ENCODE measurements at regions of chr4 and their contacts with region 1.

Region 1: DNA sequence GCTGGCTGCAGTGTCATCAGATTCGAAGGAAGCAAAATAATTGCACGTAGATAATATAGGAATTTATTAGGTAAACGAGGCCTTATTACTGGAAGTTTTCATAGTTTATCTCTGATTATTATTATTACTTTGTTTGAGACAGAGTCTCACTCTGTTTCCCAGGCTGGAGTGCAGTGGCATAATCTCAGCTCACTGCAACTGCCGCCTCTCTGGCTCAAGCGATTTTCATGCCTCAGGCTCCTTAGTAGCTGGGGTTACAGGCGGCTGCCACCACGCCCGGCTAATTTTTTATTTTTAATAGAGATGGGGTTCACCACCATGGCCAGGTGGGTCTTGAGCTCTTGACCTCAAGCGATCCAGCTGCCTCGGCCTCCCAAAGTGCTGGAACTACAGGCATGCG is 12.5 kb downstream of the CLCN3 start:
- DNase-seq: no peak
- ATAC-seq: no peak
- H3K4me3 ChIP-seq: no peak overlapping the region
- H3K27ac ChIP-seq: no peak overlapping the region
- H3K4me1 ChIP-seq: no peaks in the 10 kb centered on the region
- H3K27me3 ChIP-seq: no peaks in the 10 kb centered on the region
- CTCF ChIP-seq: no peak
- EP300 ChIP-seq: no peak
- POLR2A ChIP-seq: no peak
- RAD21 ChIP-seq: no peak

Region 2: GRCh38 chr4:169645627-169646026 is 12.7 kb after region 1 on chr4:
- CTCF ChIA-PET with region 1: interaction called, 14 read pairs
- POLR2A ChIA-PET with region 1: interaction called, 3 read pairs
- RAD21 ChIA-PET with region 1: no interaction called
- SMC1A ChIA-PET with region 1: interaction called, 3 read pairs
- in situ Hi-C with region 1: no loop called
- intact Hi-C with region 1: no loop called
- DNase-seq: no peak
- ATAC-seq: no peak
- H3K4me3 ChIP-seq: no peak overlapping the region
- H3K27ac ChIP-seq: no peak overlapping the region
- H3K4me1 ChIP-seq: no peaks in the 10 kb centered on the region
- H3K27me3 ChIP-seq: no peaks in the 10 kb centered on the region
- CTCF ChIP-seq: no peak
- EP300 ChIP-seq: no peak
- POLR2A ChIP-seq: no peak
- RAD21 ChIP-seq: no peak